ENCODE measurements at regions of chr14 and their contacts with region 1.

Region 1: DNA sequence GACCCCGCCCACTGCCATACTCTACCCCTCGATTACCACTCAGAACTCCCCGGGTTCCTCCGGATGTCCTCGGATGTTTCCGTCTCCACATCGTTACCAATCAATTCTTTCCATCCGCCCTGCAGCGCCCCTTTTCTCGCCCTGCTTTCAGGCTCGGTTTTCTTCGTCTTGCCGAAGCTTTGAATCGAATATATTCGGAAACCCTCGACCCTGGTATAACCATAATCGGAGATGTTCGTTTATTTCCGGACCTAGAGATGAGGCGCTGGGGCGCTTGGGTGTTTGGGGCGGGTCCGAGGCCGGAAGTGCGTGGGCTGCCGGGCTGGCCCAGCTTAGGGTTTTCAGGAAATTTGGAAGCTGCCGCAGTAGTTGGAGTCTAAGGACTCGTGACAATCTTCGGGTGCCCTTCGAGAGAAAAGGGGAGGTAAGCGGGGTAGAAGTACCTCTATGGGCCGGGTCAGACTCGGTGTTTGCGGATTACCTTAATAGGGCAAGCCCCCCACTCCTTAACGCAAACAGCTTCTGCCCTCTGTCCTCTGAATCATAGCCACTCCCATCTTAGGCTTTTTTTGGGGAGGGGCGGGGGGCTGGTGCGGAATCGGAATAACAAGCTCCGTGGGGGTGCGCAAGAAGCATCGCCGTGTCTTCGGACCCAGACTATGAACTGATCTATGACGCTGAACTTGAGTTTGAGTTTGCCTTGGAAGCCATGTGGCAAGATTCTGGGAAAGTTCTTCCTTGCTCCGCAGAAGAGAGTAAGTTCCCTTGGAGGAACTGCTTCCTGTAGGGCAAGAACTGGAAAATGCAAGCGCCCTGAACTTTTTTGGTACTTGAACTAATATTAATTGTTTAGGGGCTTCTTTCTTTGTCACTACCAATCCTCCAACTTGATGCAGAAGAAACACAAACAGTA is at the start of gene C14orf119:
- DNase-seq: peak; percentile 99
- ATAC-seq: peak; percentile 93
- H3K4me3 ChIP-seq: peak within 1 kb of the TSS; percentile 88 to 90
- H3K27ac ChIP-seq: peak within 1 kb of the TSS; percentile 96
- H3K4me1 ChIP-seq: peaks cover 16% of the 10 kb centered on the region
- H3K27me3 ChIP-seq: no peaks in the 10 kb centered on the region
- CTCF ChIP-seq: no peak
- total RNA-seq, gene C14orf119: 39.6 TPM

Region 2: GRCh38 chr14:22908601-22909000 is 186.9 kb before region 1 on chr14:
- CTCF ChIA-PET with region 1: no interaction called
- POLR2A ChIA-PET with region 1: no interaction called
- in situ Hi-C with region 1: no loop called
- intact Hi-C with region 1: no loop called
- DNase-seq: no peak
- ATAC-seq: no peak
- H3K4me3 ChIP-seq: no peak overlapping the region
- H3K27ac ChIP-seq: no peak overlapping the region
- H3K4me1 ChIP-seq: no peaks in the 10 kb centered on the region
- H3K27me3 ChIP-seq: no peaks in the 10 kb centered on the region
- CTCF ChIP-seq: no peak

Region 3: GRCh38 chr14:23068476-23069412 is 26.7 kb before region 1 on chr14:
- CTCF ChIA-PET with region 1: interaction called, 28 read pairs
- POLR2A ChIA-PET with region 1: interaction called, 6 read pairs
- in situ Hi-C with region 1: no loop called
- intact Hi-C with region 1: no loop called
- DNase-seq: peak; percentile 86
- ATAC-seq: peak; percentile 88
- H3K4me3 ChIP-seq: no peak overlapping the region
- H3K27ac ChIP-seq: peak overlapping the region; percentile 7; the same call in 1 of the 2 replicates
- H3K4me1 ChIP-seq: peaks cover 16% of the 10 kb centered on the region
- H3K27me3 ChIP-seq: no peaks in the 10 kb centered on the region
- CTCF ChIP-seq: peak; percentile 95

Region 4: GRCh38 chr14:23174276-23175184 is 79.1 kb after region 1 on chr14:
- CTCF ChIA-PET with region 1: no interaction called
- POLR2A ChIA-PET with region 1: interaction called, 20 read pairs
- in situ Hi-C with region 1: no loop called
- intact Hi-C with region 1: no loop called
- DNase-seq: no peak
- ATAC-seq: no peak
- H3K4me3 ChIP-seq: no peak overlapping the region
- H3K27ac ChIP-seq: no peak overlapping the region
- H3K4me1 ChIP-seq: no peaks in the 10 kb centered on the region; the same call in 1 of the 2 replicates
- H3K27me3 ChIP-seq: peaks cover 2% of the 10 kb centered on the region
- CTCF ChIP-seq: no peak

Region 5: GRCh38 chr14:23227566-23227965 is 132.1 kb after region 1 on chr14:
- CTCF ChIA-PET with region 1: no interaction called
- POLR2A ChIA-PET with region 1: interaction called, 13 read pairs
- in situ Hi-C with region 1: no loop called
- intact Hi-C with region 1: no loop called
- DNase-seq: no peak
- ATAC-seq: no peak
- H3K4me3 ChIP-seq: no peak overlapping the region
- H3K27ac ChIP-seq: no peak overlapping the region
- H3K4me1 ChIP-seq: no peaks in the 10 kb centered on the region
- H3K27me3 ChIP-seq: no peaks in the 10 kb centered on the region
- CTCF ChIP-seq: no peak

Region 6: DNA sequence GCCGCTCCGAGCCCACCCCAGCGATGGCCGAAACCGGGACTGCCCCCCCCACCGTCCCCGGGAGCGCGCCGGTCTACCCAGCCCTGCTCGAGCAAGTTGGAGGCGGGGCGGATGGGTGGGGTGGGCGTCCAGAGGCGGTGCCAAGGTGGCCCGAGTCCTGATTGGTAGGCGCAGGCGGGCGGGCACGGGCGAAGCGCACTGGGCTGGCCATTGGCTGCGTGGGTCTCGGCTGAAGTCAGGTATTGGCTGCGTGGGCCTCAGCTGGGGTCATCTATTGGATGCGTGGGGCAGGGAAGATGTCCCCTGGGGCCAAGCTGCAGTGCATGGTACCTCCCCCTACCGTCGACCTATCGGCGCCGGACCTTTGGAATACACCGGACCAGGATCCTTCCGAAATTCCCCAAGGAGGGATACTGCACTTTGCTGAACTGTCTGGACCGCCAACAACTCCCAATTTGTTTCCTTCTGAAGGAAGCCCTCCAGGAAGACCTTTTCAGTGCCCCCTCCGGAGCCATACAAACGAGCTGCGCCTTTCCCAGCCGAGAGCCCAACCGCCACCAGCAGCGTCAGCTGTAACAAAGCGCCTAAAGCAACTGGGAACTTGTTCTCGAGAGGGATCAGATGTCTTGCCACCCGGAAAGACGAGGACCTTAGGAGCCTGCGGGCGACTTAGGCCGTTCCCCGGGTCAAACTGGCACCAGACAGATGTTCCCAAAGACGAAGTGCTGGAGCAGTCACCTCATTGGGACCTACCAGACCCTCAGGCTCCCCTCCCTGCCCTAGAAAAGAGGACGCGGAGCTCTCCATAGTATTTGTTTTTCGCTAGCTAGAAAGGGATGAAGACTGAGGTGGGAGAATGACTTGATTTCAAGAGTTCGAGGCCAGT is 190.8 kb after region 1 on chr14 and contains the start of gene HOMEZ:
- CTCF ChIA-PET with region 1: no interaction called
- POLR2A ChIA-PET with region 1: no interaction called
- in situ Hi-C with region 1: no loop called
- intact Hi-C with region 1: no loop called
- DNase-seq: peak; percentile 73
- ATAC-seq: peak; percentile 99
- H3K4me3 ChIP-seq: peak within 1 kb of the TSS; percentile 90 to 92
- H3K27ac ChIP-seq: peak within 1 kb of the TSS; percentile 92
- H3K4me1 ChIP-seq: peaks cover 7% of the 10 kb centered on the region
- H3K27me3 ChIP-seq: no peaks in the 10 kb centered on the region
- CTCF ChIP-seq: no peak
- total RNA-seq, gene HOMEZ: 7.6 TPM

Region 7: GRCh38 chr14:23454445-23454856 is 359.0 kb after region 1 on chr14:
- CTCF ChIA-PET with region 1: no interaction called
- POLR2A ChIA-PET with region 1: no interaction called
- in situ Hi-C with region 1: no loop called
- intact Hi-C with region 1: no loop called
- DNase-seq: no peak
- ATAC-seq: no peak
- H3K4me3 ChIP-seq: no peak overlapping the region
- H3K27ac ChIP-seq: no peak overlapping the region
- H3K4me1 ChIP-seq: no peaks in the 10 kb centered on the region
- H3K27me3 ChIP-seq: peaks cover 2% of the 10 kb centered on the region; the same call in 1 of the 2 replicates
- CTCF ChIP-seq: no peak

Measured in Panc1 (cell line).